Heart right ventricle (tissue), 16 donors: ENCODE measurements at regions of chr1 and their contacts with region 1.

Region 1: GRCh38 chr1:116580446-116581322 is 9.9 kb upstream of the CD58 start:
- DNase-seq: no peak
- ATAC-seq: no peak
- H3K4me3 ChIP-seq: no peak overlapping the region
- H3K27ac ChIP-seq: peak overlapping the region in 1 of 10 donors; percentile 71
- H3K4me1 ChIP-seq: peaks cover 0 to 31% (median 8%) of the 10 kb centered on the region in 9 donors
- H3K27me3 ChIP-seq: no peaks in the 10 kb centered on the region
- CTCF ChIP-seq: no peak

Region 2: GRCh38 chr1:116674011-116674531 is 93.4 kb after region 1 on chr1:
- intact Hi-C with region 1: loop called in 6 of 10 experiments (anchors 5 to 10 kb)
- DNase-seq: no peak
- ATAC-seq: no peak
- H3K4me3 ChIP-seq: no peak overlapping the region
- H3K27ac ChIP-seq: no peak overlapping the region
- H3K4me1 ChIP-seq: peaks cover 0 to 4% (median 0%) of the 10 kb centered on the region in 9 donors
- H3K27me3 ChIP-seq: peaks cover 0 to 14% (median 4%) of the 10 kb centered on the region in 7 donors
- CTCF ChIP-seq: no peak